ENCODE measurements at regions of chr17 and their contacts with region 1.

Region 1: DNA sequence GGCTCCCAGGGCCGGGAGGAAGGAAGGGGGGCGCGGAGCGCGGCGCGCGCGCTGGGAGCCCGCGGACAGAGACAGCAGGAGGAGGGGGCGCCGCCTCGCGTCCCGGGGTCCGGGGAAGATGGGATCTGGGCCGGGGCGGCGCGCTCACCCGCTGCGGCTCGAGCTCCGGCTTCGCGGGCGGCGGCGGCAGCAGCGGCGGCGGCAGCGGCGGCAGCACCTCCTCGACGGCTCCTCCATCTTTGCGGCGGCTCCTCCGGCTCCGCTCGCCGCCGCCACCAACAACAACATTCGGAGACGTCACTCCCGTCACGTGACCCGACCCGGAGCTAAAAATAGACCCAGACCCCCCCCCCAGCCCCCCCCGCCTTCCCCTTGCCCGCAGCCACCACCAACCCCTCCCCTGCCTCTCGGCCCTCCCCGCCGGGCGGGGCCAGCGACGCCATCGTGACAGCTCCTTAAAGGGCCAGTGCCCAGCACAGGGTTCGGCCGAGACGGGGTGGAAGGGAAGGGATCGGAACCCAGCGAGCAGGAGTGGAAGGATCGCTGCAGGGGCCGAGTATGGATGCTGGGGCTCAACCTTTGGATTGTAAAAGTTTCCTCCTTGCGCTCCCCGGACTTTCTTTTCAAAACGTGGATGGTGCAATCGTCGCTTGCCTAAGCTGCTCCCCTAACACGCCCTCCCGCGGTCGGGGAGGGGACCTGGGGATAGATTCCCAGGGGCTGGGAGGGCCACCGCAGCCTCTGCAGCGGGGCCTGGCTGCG is at the start of gene HDAC5:
- DNase-seq: peak; percentile 96
- H3K4me3 ChIP-seq: peak within 1 kb of the TSS; percentile 85
- H3K27ac ChIP-seq: peak within 1 kb of the TSS; percentile 62
- H3K4me1 ChIP-seq: peaks cover 25% of the 10 kb centered on the region
- CTCF ChIP-seq: peak; percentile 78
- total RNA-seq, gene HDAC5: 26.4 and 41.5 TPM in 2 replicates

Region 2: GRCh38 chr17:44186307-44187130 is 63.0 kb after region 1 on chr17 and contains the start of gene TMUB2:
- CTCF ChIA-PET with region 1: interaction called, 5 read pairs
- POLR2A ChIA-PET with region 1: interaction called, 3 read pairs
- intact Hi-C with region 1: loop called (anchors 1 kb)
- DNase-seq: peak; percentile 100
- H3K4me3 ChIP-seq: peak within 1 kb of the TSS; percentile 76
- H3K27ac ChIP-seq: peak within 1 kb of the TSS; percentile 68
- H3K4me1 ChIP-seq: peaks cover 26% of the 10 kb centered on the region
- CTCF ChIP-seq: no peak
- total RNA-seq, gene TMUB2: 16.0 and 21.3 TPM in 2 replicates

Measured in OCI-LY7 (cell line).